AG04450 (cell line): ENCODE measurements at regions of chrX and their contacts with region 1.

Region 1: DNA sequence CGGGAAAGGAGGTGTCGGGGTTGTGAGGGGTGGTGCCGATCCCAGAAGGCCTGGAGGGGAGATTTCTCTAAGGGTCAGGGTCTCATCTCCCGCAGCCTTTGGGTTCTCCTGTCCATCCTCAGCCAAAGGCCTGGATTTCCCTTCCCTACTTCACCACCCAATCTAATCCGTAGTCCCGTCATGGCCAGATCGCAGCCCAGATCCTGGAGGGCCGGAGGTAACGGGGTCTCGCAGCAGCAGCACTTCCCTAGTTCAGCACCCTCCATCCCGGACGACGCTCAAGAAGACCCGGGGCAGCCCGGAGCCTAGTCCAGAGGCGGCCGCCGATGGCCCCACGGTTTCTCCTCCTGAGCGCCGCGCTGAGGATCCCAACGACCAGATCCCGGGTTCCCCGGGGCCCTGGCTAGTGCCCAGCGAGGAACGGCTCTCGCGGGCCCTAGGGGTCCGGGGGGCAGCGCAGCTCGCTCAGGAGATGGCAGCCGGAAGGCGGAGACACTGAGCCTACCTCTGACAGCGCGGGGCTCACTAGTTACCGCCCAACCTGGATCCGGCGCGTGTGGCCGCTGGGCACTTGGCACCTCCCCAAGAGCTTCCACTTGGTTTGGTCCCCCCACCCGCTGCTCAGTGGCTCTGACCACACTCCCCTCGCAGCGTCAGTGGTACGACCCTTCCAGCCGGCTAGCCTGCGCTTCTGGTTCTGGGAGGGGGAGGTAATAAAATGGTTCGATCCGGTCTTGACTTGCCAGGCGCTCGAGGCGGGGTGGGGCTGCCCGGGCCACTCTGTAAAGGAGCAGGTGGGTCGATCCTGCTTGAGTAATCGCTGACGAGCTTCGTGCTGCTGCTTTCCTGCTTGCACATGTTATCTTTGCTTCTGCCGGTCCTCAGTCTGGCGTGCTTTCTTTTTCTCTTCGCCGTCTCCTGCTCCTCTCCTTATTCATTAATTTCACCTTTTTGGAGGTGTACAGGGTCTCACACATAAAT is 3.6 kb downstream of the MAGIX start:
- DNase-seq: no peak
- H3K4me3 ChIP-seq: peak overlapping the region; percentile 35
- H3K27ac ChIP-seq: peak overlapping the region; percentile 85
- H3K27me3 ChIP-seq: no peaks in the 10 kb centered on the region
- CTCF ChIP-seq: no peak

Region 2: DNA sequence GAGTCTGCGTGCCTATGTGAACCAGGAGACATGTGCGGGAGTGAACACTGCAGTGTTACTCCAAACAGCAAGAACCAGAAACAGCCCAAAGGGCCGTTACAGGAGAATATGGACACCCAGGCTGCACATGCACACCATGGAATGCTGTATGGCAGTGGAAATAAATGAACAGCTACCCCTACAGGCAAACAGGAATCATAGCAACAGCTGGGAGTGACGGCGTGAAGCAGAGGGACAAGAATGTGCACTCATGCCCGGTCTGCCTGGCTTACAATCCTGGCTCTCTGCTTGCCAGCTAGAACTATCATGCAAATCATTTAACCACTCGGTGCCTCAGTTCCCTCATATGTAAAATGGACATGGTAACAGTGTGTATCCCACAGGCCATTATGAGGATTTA is 59.3 kb before region 1 on chrX:
- CTCF ChIA-PET with region 1: no interaction called
- POLR2A ChIA-PET with region 1: no interaction called
- DNase-seq: peak; percentile 16
- H3K4me3 ChIP-seq: no peak overlapping the region
- H3K27ac ChIP-seq: no peak overlapping the region
- H3K27me3 ChIP-seq: no peaks in the 10 kb centered on the region
- CTCF ChIP-seq: peak; percentile 57

Region 3: DNA sequence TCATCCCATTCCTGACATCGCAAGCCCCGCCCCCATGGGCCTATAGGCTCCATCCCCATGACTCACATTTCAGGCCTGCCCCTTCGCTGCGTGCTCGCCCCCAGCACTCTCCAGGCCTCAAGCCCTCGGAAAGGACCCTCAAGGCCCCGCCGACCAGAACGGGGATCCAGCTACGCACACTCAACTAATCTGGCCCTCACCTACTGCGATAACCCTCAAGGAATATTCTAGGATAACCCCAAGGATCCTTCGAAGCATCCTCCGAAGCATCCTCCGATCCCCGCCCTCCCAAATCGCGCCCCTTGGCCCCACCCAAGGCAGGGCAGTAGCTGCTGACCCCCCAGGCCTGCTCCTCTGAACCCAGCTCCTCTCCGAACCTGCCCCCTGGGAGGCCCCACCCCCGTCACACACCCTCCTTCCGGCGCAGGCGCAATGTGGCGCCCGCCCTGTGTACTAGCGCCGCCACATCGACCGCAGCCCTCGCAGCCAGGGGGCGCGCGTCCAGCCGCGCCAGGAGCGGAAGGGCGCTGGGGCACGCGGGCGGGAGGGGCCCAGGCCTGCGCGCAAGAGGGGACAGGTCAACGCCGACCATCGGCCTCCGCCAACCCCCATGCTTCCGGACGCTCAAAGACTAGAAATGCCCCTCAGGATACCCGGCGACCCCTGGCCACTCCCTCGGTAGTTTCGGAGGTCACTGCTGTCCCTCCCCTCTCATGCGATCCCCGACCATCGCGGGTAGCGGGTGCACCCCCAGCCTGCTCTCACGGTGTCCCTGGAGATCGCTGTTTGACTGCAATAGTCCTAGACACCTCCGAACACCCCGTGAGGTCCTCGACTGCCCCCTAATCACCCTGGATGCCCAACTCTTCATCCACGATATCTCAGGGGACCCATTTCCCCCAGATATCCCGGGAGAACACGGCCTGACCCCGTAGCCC is 10.0 kb before region 1 on chrX:
- CTCF ChIA-PET with region 1: interaction called, 28 read pairs
- POLR2A ChIA-PET with region 1: interaction called, 6 read pairs
- DNase-seq: no peak
- H3K4me3 ChIP-seq: peak overlapping the region; percentile 58
- H3K27ac ChIP-seq: peak overlapping the region; percentile 98
- H3K27me3 ChIP-seq: no peaks in the 10 kb centered on the region
- CTCF ChIP-seq: peak; percentile 59